Body of pancreas (tissue), 4 donors: ENCODE measurements at regions of chr16 and their contacts with region 1.

Region 1: GRCh38 chr16:714558-715476 is at the start of gene METRN:
- DNase-seq: peak; percentile 92 to 95 (median 93)
- ATAC-seq: peak; percentile 91
- H3K4me3 ChIP-seq: peak within 1 kb of the TSS; percentile 25 to 43
- H3K27ac ChIP-seq: peak within 1 kb of the TSS; percentile 16 to 73 (median 63)
- H3K4me1 ChIP-seq: peaks cover 59% of the 10 kb centered on the region
- H3K27me3 ChIP-seq: peaks cover 0 to 15% of the 10 kb centered on the region in 2 donors
- CTCF ChIP-seq: no peak
- POLR2A ChIP-seq: no peak
- total RNA-seq, gene METRN: 36.6 to 71.9 TPM

Region 2: GRCh38 chr16:275041-275621 is 439.7 kb before region 1 on chr16:
- intact Hi-C with region 1: no loop called
- DNase-seq: peak in 1 of 4 donors; percentile 44
- ATAC-seq: peak; percentile 9
- H3K4me3 ChIP-seq: no peak overlapping the region
- H3K27ac ChIP-seq: no peak overlapping the region
- H3K4me1 ChIP-seq: peaks cover 49% of the 10 kb centered on the region
- H3K27me3 ChIP-seq: no peaks in the 10 kb centered on the region
- CTCF ChIP-seq: no peak
- POLR2A ChIP-seq: peak; percentile 9 to 16 (median 13)

Region 3: GRCh38 chr16:1054660-1055556 is 340.1 kb after region 1 on chr16:
- intact Hi-C with region 1: loop called (anchors 5 kb)
- DNase-seq: peak; percentile 68 to 81 (median 72)
- ATAC-seq: peak; percentile 79
- H3K4me3 ChIP-seq: no peak overlapping the region
- H3K27ac ChIP-seq: no peak overlapping the region
- H3K4me1 ChIP-seq: peaks cover 5% of the 10 kb centered on the region
- H3K27me3 ChIP-seq: peaks cover 0 to 19% of the 10 kb centered on the region in 2 donors
- CTCF ChIP-seq: peak; percentile 74 to 86 (median 82)
- POLR2A ChIP-seq: no peak